B cell (primary cell): ENCODE measurements at regions of chr3 and their contacts with region 1.

Region 1: GRCh38 chr3:137105277-137105977 is 147.6 kb downstream of the IL20RB start:
- DNase-seq: peak; percentile 56
- ATAC-seq: no peak
- H3K4me3 ChIP-seq: no peak overlapping the region
- H3K4me3 Mint-ChIP-seq: no peak overlapping the region
- H3K27ac ChIP-seq: no peak overlapping the region
- H3K27ac Mint-ChIP-seq: no peak overlapping the region
- H3K4me1 ChIP-seq: peaks cover 2 to 5% of the 10 kb centered on the region in 2 donors
- H3K4me1 Mint-ChIP-seq: no peaks in the 10 kb centered on the region
- H3K27me3 ChIP-seq: peaks cover 0 to 9% (median 3%) of the 10 kb centered on the region in 4 experiments
- H3K27me3 Mint-ChIP-seq: peaks cover 21% of the 10 kb centered on the region
- CTCF ChIP-seq: peak; percentile 79

Region 2: GRCh38 chr3:136955813-136956212 is 149.6 kb before region 1 on chr3:
- CTCF ChIA-PET with region 1: no interaction called
- POLR2A ChIA-PET with region 1: no interaction called
- intact Hi-C with region 1: no loop called
- DNase-seq: no peak
- ATAC-seq: no peak
- H3K4me3 ChIP-seq: no peak overlapping the region
- H3K4me3 Mint-ChIP-seq: no peak overlapping the region
- H3K27ac ChIP-seq: no peak overlapping the region
- H3K27ac Mint-ChIP-seq: no peak overlapping the region
- H3K4me1 ChIP-seq: peaks cover 2 to 3% of the 10 kb centered on the region in 2 donors
- H3K4me1 Mint-ChIP-seq: peaks cover 17% of the 10 kb centered on the region
- H3K27me3 ChIP-seq: no peaks in the 10 kb centered on the region
- H3K27me3 Mint-ChIP-seq: no peaks in the 10 kb centered on the region
- CTCF ChIP-seq: no peak

Region 3: GRCh38 chr3:137121704-137122314 is 16.4 kb after region 1 on chr3:
- CTCF ChIA-PET with region 1: interaction called, 10 read pairs
- POLR2A ChIA-PET with region 1: no interaction called
- intact Hi-C with region 1: loop called (anchors 1 kb)
- DNase-seq: no peak
- ATAC-seq: no peak
- H3K4me3 ChIP-seq: no peak overlapping the region
- H3K4me3 Mint-ChIP-seq: no peak overlapping the region
- H3K27ac ChIP-seq: no peak overlapping the region
- H3K27ac Mint-ChIP-seq: no peak overlapping the region
- H3K4me1 ChIP-seq: no peaks in the 10 kb centered on the region
- H3K4me1 Mint-ChIP-seq: no peaks in the 10 kb centered on the region
- H3K27me3 ChIP-seq: no peaks in the 10 kb centered on the region
- H3K27me3 Mint-ChIP-seq: peaks cover 27% of the 10 kb centered on the region
- CTCF ChIP-seq: peak; percentile 35

Region 4: DNA sequence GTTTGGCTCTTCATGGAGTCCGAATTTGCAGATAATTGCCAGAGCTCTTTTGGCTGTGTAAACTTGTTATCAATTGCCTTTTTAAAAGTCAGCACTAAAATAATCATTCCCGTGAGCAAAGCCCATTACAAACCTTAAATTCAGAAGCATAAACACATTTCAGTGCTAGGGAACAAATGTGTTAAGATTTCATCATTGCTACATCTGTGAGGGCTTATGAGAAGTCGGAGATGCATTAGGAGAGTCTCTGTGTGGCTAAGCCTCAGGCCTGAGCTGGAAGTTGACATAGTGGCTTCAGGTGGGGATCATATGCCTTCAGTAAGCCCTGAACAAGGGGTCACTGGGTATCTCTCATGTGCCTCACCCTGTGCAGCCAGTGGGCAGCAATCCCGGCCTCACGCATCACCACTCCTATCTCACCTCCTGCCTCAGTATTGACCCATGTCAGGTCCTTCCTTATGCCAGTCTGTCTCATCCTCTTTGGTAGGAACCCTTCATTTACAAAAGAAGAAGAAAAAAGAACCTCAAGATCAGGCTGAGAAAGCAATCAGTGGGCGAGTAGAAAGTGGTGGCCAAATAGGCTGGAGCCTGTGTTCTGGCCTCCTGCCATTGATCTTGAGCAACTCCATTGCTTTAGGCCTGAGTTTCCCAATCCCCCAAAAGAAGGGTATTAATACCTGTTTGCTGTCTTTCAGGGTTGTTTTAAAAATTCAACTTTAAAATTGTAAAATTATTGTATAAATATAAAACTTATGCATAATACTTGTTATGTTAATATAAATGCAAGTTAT is 85.9 kb after region 1 on chr3:
- CTCF ChIA-PET with region 1: no interaction called
- POLR2A ChIA-PET with region 1: no interaction called
- intact Hi-C with region 1: no loop called
- DNase-seq: no peak
- ATAC-seq: no peak
- H3K4me3 ChIP-seq: no peak overlapping the region
- H3K4me3 Mint-ChIP-seq: no peak overlapping the region
- H3K27ac ChIP-seq: no peak overlapping the region
- H3K27ac Mint-ChIP-seq: no peak overlapping the region
- H3K4me1 ChIP-seq: no peaks in the 10 kb centered on the region
- H3K4me1 Mint-ChIP-seq: no peaks in the 10 kb centered on the region
- H3K27me3 ChIP-seq: no peaks in the 10 kb centered on the region
- H3K27me3 Mint-ChIP-seq: no peaks in the 10 kb centered on the region
- CTCF ChIP-seq: no peak